B cell (primary cell): ENCODE measurements at regions of chr15 and their contacts with region 1.

Region 1: GRCh38 chr15:99275525-99276128 is 24.3 kb downstream of the LRRC28 start:
- DNase-seq: peak; percentile 22
- ATAC-seq: peak; percentile 17
- H3K4me3 ChIP-seq: no peak overlapping the region
- H3K4me3 Mint-ChIP-seq: no peak overlapping the region
- H3K27ac ChIP-seq: no peak overlapping the region
- H3K27ac Mint-ChIP-seq: no peak overlapping the region
- H3K4me1 ChIP-seq: peaks cover 6 to 10% of the 10 kb centered on the region in 2 donors
- H3K4me1 Mint-ChIP-seq: peaks cover 11% of the 10 kb centered on the region
- H3K27me3 ChIP-seq: no peaks in the 10 kb centered on the region
- H3K27me3 Mint-ChIP-seq: no peaks in the 10 kb centered on the region
- CTCF ChIP-seq: no peak

Region 2: GRCh38 chr15:99110581-99111320 is 164.9 kb before region 1 on chr15:
- CTCF ChIA-PET with region 1: no interaction called
- POLR2A ChIA-PET with region 1: no interaction called
- intact Hi-C with region 1: no loop called
- DNase-seq: no peak
- ATAC-seq: no peak
- H3K4me3 ChIP-seq: no peak overlapping the region
- H3K4me3 Mint-ChIP-seq: no peak overlapping the region
- H3K27ac ChIP-seq: no peak overlapping the region
- H3K27ac Mint-ChIP-seq: no peak overlapping the region
- H3K4me1 ChIP-seq: peaks cover 0 to 4% of the 10 kb centered on the region in 2 donors
- H3K4me1 Mint-ChIP-seq: peaks cover 5% of the 10 kb centered on the region
- H3K27me3 ChIP-seq: peaks cover 0 to 15% (median 0%) of the 10 kb centered on the region in 4 experiments
- H3K27me3 Mint-ChIP-seq: peaks cover 29% of the 10 kb centered on the region
- CTCF ChIP-seq: no peak

Region 3: DNA sequence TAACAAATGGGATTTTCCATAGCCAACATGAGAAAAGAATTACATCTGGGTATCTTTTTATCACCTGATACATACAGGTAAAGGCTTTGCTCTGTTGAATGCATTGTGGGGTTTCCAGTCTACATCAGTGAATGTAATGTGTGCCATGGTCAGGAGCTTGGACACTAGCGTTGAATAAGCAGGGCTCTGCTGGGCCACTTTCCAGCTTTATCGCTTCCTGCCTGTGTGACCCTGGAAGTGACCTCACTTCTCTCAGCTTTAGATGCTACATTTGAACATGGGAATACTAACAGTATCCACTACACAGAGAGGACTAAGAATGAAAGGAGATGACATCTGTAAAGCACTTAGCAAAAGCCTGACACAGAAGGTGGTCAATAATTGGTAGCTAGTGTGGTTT is 66.3 kb before region 1 on chr15:
- CTCF ChIA-PET with region 1: no interaction called
- POLR2A ChIA-PET with region 1: no interaction called
- intact Hi-C with region 1: no loop called
- DNase-seq: no peak
- ATAC-seq: no peak
- H3K4me3 ChIP-seq: no peak overlapping the region
- H3K4me3 Mint-ChIP-seq: no peak overlapping the region
- H3K27ac ChIP-seq: no peak overlapping the region
- H3K27ac Mint-ChIP-seq: no peak overlapping the region
- H3K4me1 ChIP-seq: no peaks in the 10 kb centered on the region
- H3K4me1 Mint-ChIP-seq: no peaks in the 10 kb centered on the region
- H3K27me3 ChIP-seq: no peaks in the 10 kb centered on the region
- H3K27me3 Mint-ChIP-seq: no peaks in the 10 kb centered on the region
- CTCF ChIP-seq: no peak

Region 4: DNA sequence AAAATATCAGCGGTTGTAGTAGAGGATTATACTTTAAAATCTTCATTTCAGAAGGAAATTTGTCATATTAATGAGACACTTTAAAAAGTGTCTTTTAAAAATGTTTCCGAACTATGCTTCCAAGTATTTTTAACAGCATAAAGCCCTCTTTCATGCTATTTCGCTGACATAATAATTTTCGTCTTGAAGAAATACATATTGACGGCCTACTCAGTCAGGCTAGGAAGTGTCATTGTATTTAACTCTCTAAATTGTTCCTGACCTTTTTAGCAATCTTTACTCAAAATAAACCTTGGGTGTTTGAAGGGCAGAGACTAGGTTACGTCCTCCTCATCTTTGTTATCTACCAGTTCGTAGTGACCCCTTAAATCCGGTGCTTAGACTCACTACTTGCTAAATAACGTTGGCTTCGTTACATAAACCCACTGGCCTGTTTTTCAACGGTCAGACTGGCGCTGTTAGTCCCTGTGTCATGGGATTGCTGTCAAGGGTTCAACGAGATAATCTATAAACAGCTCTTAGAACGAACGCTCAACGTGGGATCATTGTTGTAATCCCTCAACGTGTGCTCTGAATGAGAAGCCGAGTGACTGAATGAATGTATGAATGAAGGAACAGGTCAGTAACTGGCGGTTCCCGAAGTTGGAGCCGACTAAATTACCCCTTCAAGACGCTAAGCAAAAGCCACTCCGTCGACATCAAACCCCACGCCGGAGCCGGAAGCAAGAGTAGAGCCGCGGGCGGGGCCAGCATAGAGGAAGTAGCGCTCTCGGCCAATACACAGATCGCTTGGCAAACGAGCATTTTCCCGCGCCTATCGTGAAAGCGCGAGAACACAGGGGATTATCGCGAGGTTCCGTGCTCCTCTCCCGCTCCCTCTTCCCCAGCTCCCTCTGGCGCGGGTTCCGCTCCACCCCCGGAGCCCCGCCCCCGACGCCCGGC is 24.9 kb before region 1 on chr15:
- CTCF ChIA-PET with region 1: interaction called, 17 read pairs
- POLR2A ChIA-PET with region 1: no interaction called
- intact Hi-C with region 1: no loop called
- DNase-seq: peak; percentile 97
- ATAC-seq: peak; percentile 97
- H3K4me3 ChIP-seq: peak overlapping the region; percentile 61 to 91 (median 81)
- H3K4me3 Mint-ChIP-seq: peak overlapping the region; percentile 96
- H3K27ac ChIP-seq: peak overlapping the region; percentile 70 to 81
- H3K27ac Mint-ChIP-seq: peak overlapping the region; percentile 92
- H3K4me1 ChIP-seq: peaks cover 18 to 30% of the 10 kb centered on the region in 2 donors
- H3K4me1 Mint-ChIP-seq: peaks cover 31% of the 10 kb centered on the region
- H3K27me3 ChIP-seq: no peaks in the 10 kb centered on the region
- H3K27me3 Mint-ChIP-seq: no peaks in the 10 kb centered on the region
- CTCF ChIP-seq: no peak

Region 5: GRCh38 chr15:99264125-99264524 is 11.5 kb before region 1 on chr15:
- CTCF ChIA-PET with region 1: interaction called, 13 read pairs
- POLR2A ChIA-PET with region 1: no interaction called
- intact Hi-C with region 1: no loop called
- DNase-seq: no peak
- ATAC-seq: no peak
- H3K4me3 ChIP-seq: no peak overlapping the region
- H3K4me3 Mint-ChIP-seq: no peak overlapping the region
- H3K27ac ChIP-seq: no peak overlapping the region
- H3K27ac Mint-ChIP-seq: no peak overlapping the region
- H3K4me1 ChIP-seq: no peaks in the 10 kb centered on the region
- H3K4me1 Mint-ChIP-seq: no peaks in the 10 kb centered on the region
- H3K27me3 ChIP-seq: no peaks in the 10 kb centered on the region
- H3K27me3 Mint-ChIP-seq: no peaks in the 10 kb centered on the region
- CTCF ChIP-seq: no peak

Region 6: GRCh38 chr15:99385865-99386264 is 110.2 kb after region 1 on chr15:
- CTCF ChIA-PET with region 1: no interaction called
- POLR2A ChIA-PET with region 1: no interaction called
- intact Hi-C with region 1: no loop called
- DNase-seq: no peak
- ATAC-seq: no peak
- H3K4me3 ChIP-seq: no peak overlapping the region
- H3K4me3 Mint-ChIP-seq: no peak overlapping the region
- H3K27ac ChIP-seq: no peak overlapping the region
- H3K27ac Mint-ChIP-seq: no peak overlapping the region
- H3K4me1 ChIP-seq: peaks cover 0 to 6% of the 10 kb centered on the region in 2 donors
- H3K4me1 Mint-ChIP-seq: peaks cover 7% of the 10 kb centered on the region
- H3K27me3 ChIP-seq: no peaks in the 10 kb centered on the region
- H3K27me3 Mint-ChIP-seq: no peaks in the 10 kb centered on the region
- CTCF ChIP-seq: no peak

Region 7: GRCh38 chr15:99717161-99718009 is 441.8 kb after region 1 on chr15:
- CTCF ChIA-PET with region 1: interaction called, 10 read pairs
- POLR2A ChIA-PET with region 1: interaction called, 3 read pairs
- intact Hi-C with region 1: no loop called
- DNase-seq: no peak
- ATAC-seq: no peak
- H3K4me3 ChIP-seq: no peak overlapping the region
- H3K4me3 Mint-ChIP-seq: no peak overlapping the region
- H3K27ac ChIP-seq: no peak overlapping the region
- H3K27ac Mint-ChIP-seq: peak overlapping the region; percentile 39
- H3K4me1 ChIP-seq: peaks cover 22 to 27% of the 10 kb centered on the region in 2 donors
- H3K4me1 Mint-ChIP-seq: peaks cover 41% of the 10 kb centered on the region
- H3K27me3 ChIP-seq: no peaks in the 10 kb centered on the region
- H3K27me3 Mint-ChIP-seq: no peaks in the 10 kb centered on the region
- CTCF ChIP-seq: no peak

Region 8: DNA sequence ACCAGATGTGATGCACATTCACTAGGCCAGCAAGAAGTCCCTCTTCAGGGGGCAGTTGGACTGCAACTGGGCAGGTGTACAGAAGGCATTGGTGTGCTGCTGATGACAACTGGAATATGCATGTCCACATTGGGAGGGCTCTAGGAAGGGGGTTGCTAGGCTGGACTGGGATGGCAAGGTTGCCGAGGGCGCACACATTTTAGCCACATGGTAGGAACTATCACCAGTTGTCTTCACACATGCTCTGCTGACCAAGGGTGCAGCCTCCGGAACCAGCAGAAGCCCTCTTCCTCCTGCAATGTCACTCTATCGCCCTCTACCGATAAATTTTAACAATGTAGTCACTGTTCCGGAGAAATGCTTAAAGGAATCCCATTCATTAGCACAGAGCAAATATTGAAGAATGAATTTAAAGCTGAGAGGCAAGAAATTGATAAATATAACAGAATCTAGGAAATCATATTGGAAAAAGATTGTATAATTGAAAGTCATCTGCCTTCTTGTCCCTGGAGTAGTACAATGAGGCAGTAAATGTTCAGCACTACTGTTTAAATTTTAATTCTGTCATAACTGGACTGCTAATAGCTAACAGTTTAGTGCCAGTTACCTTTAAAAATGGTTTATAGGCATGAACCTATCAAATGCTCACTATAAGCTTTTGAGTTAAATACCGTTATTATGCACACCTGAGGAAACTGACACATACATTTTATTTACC is 480.2 kb after region 1 on chr15:
- CTCF ChIA-PET with region 1: interaction called, 153 read pairs
- POLR2A ChIA-PET with region 1: no interaction called
- intact Hi-C with region 1: loop called (anchors 1 kb)
- DNase-seq: peak; percentile 82
- ATAC-seq: peak; percentile 92
- H3K4me3 ChIP-seq: no peak overlapping the region
- H3K4me3 Mint-ChIP-seq: no peak overlapping the region
- H3K27ac ChIP-seq: no peak overlapping the region
- H3K27ac Mint-ChIP-seq: no peak overlapping the region
- H3K4me1 ChIP-seq: peaks cover 5 to 6% of the 10 kb centered on the region in 2 donors
- H3K4me1 Mint-ChIP-seq: peaks cover 7% of the 10 kb centered on the region
- H3K27me3 ChIP-seq: no peaks in the 10 kb centered on the region
- H3K27me3 Mint-ChIP-seq: peaks cover 3% of the 10 kb centered on the region
- CTCF ChIP-seq: peak; percentile 96